ENCODE measurements at regions of chr15 and their contacts with region 1.

Region 1: DNA sequence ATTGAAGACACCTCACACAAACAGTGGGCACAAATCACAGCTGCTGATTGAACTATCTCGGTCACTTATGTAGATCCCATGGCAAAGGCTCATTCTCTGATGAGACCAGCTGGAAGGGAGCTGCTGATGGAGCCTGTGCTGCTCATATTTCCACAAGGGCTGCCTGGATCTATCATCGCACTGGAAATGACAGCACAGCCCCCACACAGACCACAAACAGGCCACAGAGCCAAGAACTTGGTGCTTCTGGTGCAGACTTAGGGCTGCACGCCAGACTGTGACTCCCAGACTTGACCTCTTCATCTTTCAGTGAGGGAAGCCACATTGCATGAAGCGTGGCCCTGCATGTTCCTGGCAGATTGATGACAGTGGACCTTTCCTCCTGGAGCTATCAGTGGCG is 197.6 kb downstream of the MINAR1 start:
- DNase-seq: no peak
- H3K4me3 ChIP-seq: no peak overlapping the region
- H3K27ac ChIP-seq: no peak overlapping the region
- H3K4me1 ChIP-seq: no peaks in the 10 kb centered on the region
- H3K27me3 ChIP-seq: peaks cover 0 to 9% of the 10 kb centered on the region in 2 donors
- CTCF ChIP-seq: no peak
- POLR2A ChIP-seq: no peak

Region 2: GRCh38 chr15:79657731-79658130 is 28.0 kb after region 1 on chr15:
- intact Hi-C with region 1: loop called (anchors 1 kb)
- DNase-seq: no peak
- H3K4me3 ChIP-seq: no peak overlapping the region
- H3K27ac ChIP-seq: no peak overlapping the region
- H3K4me1 ChIP-seq: no peaks in the 10 kb centered on the region
- H3K27me3 ChIP-seq: no peaks in the 10 kb centered on the region
- CTCF ChIP-seq: no peak
- POLR2A ChIP-seq: no peak

Region 3: DNA sequence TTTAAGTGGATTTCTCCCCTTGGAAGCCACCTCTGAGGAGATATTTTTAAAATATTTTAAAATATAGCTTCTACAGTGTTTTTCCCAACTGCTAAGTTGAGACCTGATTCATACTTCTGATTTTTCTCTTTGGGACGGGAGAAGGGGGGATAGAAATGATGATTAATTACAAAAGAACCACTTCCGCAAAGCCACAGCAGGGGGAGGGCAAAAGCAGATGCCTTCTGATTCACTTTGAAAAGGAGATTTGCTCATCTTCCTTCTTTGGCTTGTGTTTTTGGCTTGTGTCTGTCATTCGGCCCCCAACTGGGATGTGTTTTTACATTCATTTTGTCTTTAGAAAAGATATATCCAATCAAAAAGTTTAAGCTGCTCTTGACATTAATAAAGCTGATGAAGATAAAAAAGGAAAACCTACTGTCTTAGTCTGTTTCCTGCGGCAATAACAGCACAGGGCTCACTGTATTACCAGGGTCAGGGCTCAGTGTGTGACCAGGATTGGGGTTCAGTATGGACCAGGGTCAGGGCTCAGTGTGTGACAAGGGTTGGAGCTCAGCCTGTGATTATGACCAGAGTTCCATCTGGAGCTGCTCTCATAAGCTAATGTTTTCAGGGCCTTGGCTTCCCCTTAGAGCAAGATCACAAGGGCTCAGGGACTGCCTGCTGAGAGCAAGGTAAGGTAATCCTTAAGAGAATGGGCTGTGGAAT is 43.9 kb after region 1 on chr15:
- intact Hi-C with region 1: no loop called
- DNase-seq: no peak
- H3K4me3 ChIP-seq: no peak overlapping the region
- H3K27ac ChIP-seq: no peak overlapping the region
- H3K4me1 ChIP-seq: no peaks in the 10 kb centered on the region
- H3K27me3 ChIP-seq: no peaks in the 10 kb centered on the region
- CTCF ChIP-seq: no peak
- POLR2A ChIP-seq: no peak